Activated T-helper 2 cell treated with anti-CD3 and anti-CD28 coated beads, Interferon-gamma antibody, Interleukin-2, Interleukin-4, amounts not matched to agents 10 μg/mL and 5 μg/mL and 100 μg/mL, durations not matched to agents 14 hours and 24 hours and 36 hours (primary cell): ENCODE measurements at regions of chr19 and their contacts with region 1.

Region 1: DNA sequence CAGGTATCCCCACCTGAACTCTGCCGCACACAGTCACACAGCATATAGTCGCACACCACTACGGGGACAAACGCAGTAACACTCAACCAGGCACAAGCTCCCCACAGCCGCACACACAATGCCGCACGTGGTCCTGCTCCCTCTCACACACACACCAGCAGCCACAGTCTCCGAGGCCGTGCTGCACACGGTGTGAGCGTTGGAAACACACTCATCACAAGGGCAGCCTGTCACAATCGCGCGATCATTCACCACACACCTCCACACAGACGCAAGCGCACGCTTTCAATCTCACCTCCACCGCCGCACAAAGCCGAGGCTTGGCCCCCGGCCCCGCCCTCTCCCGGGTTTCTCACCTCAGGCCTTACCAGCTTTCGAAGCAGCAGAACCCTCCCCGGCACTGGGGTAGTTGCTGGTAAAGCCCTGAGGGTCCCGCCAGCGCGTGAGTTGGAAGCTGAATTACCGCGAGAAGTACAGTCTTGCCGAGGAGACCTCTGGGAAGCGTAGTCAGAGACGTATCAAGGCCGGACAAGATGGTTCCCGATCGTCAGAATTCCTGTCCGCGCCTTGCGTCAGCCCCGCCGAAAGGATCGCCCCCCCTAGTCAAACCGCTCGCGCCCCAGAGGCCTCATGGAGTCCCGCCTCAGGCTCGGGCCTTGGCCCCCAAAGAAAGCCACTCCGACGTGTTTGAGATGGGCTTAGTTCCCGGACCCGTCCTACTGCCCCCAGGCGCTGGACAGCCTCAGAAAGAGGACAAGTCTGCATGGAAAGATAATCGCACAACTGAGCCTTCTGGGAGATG is at the start of gene ZNF566:
- DNase-seq: peak; percentile 92
- H3K4me3 Mint-ChIP-seq: peak within 1 kb of the TSS; percentile 93
- H3K27ac Mint-ChIP-seq: peak within 1 kb of the TSS; percentile 97
- H3K4me1 Mint-ChIP-seq: peaks cover 19% of the 10 kb centered on the region
- H3K27me3 Mint-ChIP-seq: no peaks in the 10 kb centered on the region
- total RNA-seq, gene ZNF566: 7.3 and 7.7 TPM in 2 replicates

Region 2: GRCh38 chr19:36378625-36379509 is 110.5 kb before region 1 on chr19 and contains the start of gene ZFP14:
- intact Hi-C with region 1: loop called (anchors 2 kb)
- DNase-seq: peak; percentile 91
- H3K4me3 Mint-ChIP-seq: peak within 1 kb of the TSS; percentile 85
- H3K27ac Mint-ChIP-seq: peak within 1 kb of the TSS; percentile 86
- H3K4me1 Mint-ChIP-seq: peaks cover 12% of the 10 kb centered on the region
- H3K27me3 Mint-ChIP-seq: no peaks in the 10 kb centered on the region
- total RNA-seq, gene ZFP14: 2.0 and 2.4 TPM in 2 replicates

Region 3: DNA sequence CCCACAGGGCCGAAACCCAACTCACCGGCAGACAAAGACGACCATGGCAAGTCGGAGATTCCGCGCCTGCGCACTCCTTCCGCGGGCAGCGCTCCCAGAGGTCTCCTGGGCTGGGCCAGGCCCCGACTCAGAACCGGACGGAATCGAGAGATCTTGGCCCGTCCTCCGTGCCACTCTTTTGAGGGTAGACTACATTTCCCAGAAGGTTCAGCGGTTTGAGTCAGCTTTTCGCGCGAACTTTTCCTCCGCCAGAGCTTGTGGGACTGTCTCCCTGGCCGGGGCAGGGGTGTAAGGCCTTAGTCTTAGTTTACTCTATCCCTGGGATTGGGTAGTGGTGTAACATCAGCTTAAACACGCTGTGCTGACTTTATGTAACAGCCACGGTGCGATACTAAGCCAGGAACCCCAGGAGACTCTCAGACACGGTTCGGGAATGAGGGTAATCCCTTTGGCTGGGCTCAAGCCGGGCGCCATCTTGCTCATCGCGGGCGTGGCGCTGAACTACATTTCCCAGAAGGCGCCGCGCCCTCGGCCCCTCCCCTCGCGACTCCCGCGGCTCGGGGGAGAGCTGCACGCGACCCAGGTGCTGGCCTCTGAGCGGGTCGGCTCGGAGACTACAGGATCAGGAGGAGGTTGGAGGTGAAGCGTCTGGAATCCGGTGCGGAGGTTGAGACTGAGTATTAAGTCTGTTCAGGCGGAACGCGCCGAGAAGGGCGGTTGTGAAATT is 39.0 kb after region 1 on chr19 and contains the start of gene ZNF260:
- intact Hi-C with region 1: loop called (anchors 1 kb)
- DNase-seq: peak; percentile 87
- H3K4me3 Mint-ChIP-seq: peak within 1 kb of the TSS; percentile 96
- H3K27ac Mint-ChIP-seq: peak within 1 kb of the TSS; percentile 94
- H3K4me1 Mint-ChIP-seq: peaks cover 17% of the 10 kb centered on the region
- H3K27me3 Mint-ChIP-seq: no peaks in the 10 kb centered on the region
- total RNA-seq, gene ZNF260: 6.2 and 7.1 TPM in 2 replicates

Region 4: GRCh38 chr19:36573020-36573885 is 83.9 kb after region 1 on chr19 and contains the start of gene ZNF529:
- intact Hi-C with region 1: no loop called
- DNase-seq: peak; percentile 85
- H3K4me3 Mint-ChIP-seq: peak within 1 kb of the TSS; percentile 93
- H3K27ac Mint-ChIP-seq: peak within 1 kb of the TSS; percentile 95
- H3K4me1 Mint-ChIP-seq: peaks cover 24% of the 10 kb centered on the region
- H3K27me3 Mint-ChIP-seq: no peaks in the 10 kb centered on the region
- total RNA-seq, gene ZNF529: 14.8 and 15.2 TPM in 2 replicates

Region 5: GRCh38 chr19:36687214-36688056 is 198.1 kb after region 1 on chr19 and contains the start of gene ZNF567:
- intact Hi-C with region 1: loop called (anchors 1 kb)
- DNase-seq: peak; percentile 96
- H3K4me3 Mint-ChIP-seq: peak within 1 kb of the TSS; percentile 95
- H3K27ac Mint-ChIP-seq: peak within 1 kb of the TSS; percentile 83
- H3K4me1 Mint-ChIP-seq: peaks cover 17% of the 10 kb centered on the region
- H3K27me3 Mint-ChIP-seq: no peaks in the 10 kb centered on the region
- total RNA-seq, gene ZNF567: 7.6 and 7.7 TPM in 2 replicates

Region 6: GRCh38 chr19:37370880-37371661 is 881.8 kb after region 1 on chr19 and contains the start of gene ZNF527:
- intact Hi-C with region 1: loop called (anchors 10 kb)
- DNase-seq: peak; percentile 96
- H3K4me3 Mint-ChIP-seq: peak within 1 kb of the TSS; percentile 90
- H3K27ac Mint-ChIP-seq: peak within 1 kb of the TSS; percentile 79
- H3K4me1 Mint-ChIP-seq: peaks cover 11% of the 10 kb centered on the region
- H3K27me3 Mint-ChIP-seq: no peaks in the 10 kb centered on the region
- total RNA-seq, gene ZNF527: 3.2 TPM in 2 replicates